Tibial artery (tissue), 4 donors: ENCODE measurements at regions of chr3 and their contacts with region 1.

Region 1: DNA sequence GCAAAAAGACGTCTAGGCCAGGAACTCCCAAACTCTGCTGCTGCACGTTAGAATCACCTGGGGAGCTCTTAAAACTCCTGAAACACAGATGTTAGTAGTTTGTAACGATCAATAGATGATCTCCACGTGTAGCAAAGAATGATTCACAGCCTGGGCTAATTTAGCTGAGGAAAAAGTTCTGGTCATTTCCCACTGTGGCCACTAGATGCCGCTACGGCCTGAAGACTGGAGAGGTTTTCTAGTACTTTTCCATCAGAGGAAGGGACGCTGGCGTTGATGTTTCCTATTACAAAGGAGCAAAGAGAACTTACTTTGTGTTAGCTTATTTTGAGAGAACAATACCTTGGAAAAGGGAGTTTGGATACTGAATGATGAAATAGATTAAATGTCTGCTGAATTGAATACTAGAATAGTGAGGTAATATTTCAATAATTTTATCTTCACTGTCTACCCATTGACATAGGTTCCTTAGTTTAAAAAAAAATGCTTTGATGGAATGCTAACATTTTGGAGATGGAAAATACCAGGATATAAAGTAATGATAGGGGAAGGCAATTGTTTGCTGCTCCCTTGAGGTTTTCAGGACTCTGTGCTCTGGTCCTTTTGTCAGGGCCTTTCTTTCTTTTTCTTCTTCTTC is 159.1 kb downstream of the P3H2 start:
- DNase-seq: peak; percentile 76 to 81
- H3K4me3 ChIP-seq: no peak overlapping the region
- H3K27ac ChIP-seq: peak overlapping the region in 1 of 2 donors; percentile 34
- H3K4me1 ChIP-seq: peaks cover 0 to 7% (median 2%) of the 10 kb centered on the region in 4 donors
- H3K27me3 ChIP-seq: no peaks in the 10 kb centered on the region
- CTCF ChIP-seq: peak; percentile 87

Region 2: GRCh38 chr3:189267954-189268613 is 693.6 kb before region 1 on chr3:
- intact Hi-C with region 1: loop called (anchors 10 kb)
- DNase-seq: no peak
- H3K4me3 ChIP-seq: no peak overlapping the region
- H3K27ac ChIP-seq: no peak overlapping the region
- H3K4me1 ChIP-seq: peaks cover 0 to 29% (median 9%) of the 10 kb centered on the region in 4 donors
- H3K27me3 ChIP-seq: no peaks in the 10 kb centered on the region
- CTCF ChIP-seq: no peak